Sigmoid colon (tissue), 7 donors: ENCODE measurements at regions of chr19 and their contacts with region 1.

Region 1: GRCh38 chr19:6372594-6373095 is at the start of gene ALKBH7:
- DNase-seq: peak; percentile 100
- H3K4me3 ChIP-seq: peak within 1 kb of the TSS; percentile 62 to 98 (median 88)
- H3K27ac ChIP-seq: peak within 1 kb of the TSS; percentile 95 to 100 (median 100)
- H3K4me1 ChIP-seq: peaks cover 4 to 24% (median 12%) of the 10 kb centered on the region in 4 donors
- H3K27me3 ChIP-seq: no peaks in the 10 kb centered on the region
- CTCF ChIP-seq: no peak
- EP300 ChIP-seq: no peak
- POLR2A ChIP-seq: peak; percentile 51 to 58
- total RNA-seq, gene ALKBH7: 65.8 to 146 (median 78.5) TPM

Region 2: DNA sequence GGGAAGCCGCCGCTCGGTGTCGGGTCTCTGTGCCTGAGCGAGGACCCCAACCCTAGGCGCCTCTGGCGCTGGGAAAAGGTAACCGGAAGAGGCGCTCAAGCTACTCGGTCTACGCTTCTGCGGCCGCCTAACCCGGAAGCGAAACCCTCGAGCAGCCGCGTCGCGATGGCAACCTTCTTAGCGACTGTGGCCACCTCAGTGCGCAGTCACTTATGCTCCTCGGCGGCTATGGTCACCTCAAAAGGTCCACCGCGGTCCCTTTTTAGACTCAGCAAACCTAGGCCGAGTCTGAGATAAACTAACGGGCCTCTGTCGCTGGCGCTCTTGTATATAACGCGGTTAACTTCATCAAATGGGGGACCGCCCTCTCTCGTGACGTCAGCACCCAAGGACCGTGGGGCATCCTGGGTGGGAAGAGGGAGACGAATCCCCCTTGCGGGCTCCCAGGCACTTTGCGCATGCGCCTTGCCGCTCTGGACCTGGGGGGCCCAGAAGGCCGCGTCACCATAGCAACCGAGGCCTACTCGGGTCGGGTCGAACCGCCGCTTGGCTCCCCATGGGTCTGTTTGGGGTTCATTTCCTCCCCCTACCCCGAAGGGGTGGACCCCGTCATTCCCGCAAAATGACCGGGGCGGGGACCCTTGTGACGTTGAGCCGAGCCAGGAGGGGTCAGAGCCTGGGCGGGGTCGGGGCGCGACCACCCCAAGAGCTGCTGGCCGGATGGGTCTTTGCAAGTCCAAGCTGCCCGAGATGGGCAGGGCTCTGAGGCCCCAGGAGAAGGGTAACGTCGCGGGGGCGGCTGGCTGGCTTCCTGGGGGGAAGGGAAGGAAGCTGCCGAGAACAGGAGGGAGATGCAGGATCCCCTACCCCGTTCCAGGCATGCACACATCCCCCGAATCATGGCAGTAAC is 20.7 kb after region 1 on chr19 and contains the start of gene GTF2F1:
- intact Hi-C with region 1: loop called (anchors 2 kb)
- DNase-seq: peak; percentile 98
- H3K4me3 ChIP-seq: peak within 1 kb of the TSS; percentile 69 to 93 (median 80)
- H3K27ac ChIP-seq: peak within 1 kb of the TSS; percentile 88 to 97 (median 95)
- H3K4me1 ChIP-seq: peaks cover 0 to 17% (median 12%) of the 10 kb centered on the region in 4 donors
- H3K27me3 ChIP-seq: no peaks in the 10 kb centered on the region
- CTCF ChIP-seq: no peak
- EP300 ChIP-seq: peak in 1 of 4 donors; percentile 30
- POLR2A ChIP-seq: peak in 1 of 2 donors; percentile 41
- total RNA-seq, gene GTF2F1: 34.9 to 48.2 (median 37.9) TPM

Region 3: GRCh38 chr19:6424939-6425731 is 52.5 kb after region 1 on chr19:
- intact Hi-C with region 1: loop called (anchors 5 kb)
- DNase-seq: peak; percentile 100
- H3K4me3 ChIP-seq: peak overlapping the region in 2 of 4 donors; percentile 84 to 85
- H3K27ac ChIP-seq: peak overlapping the region; percentile 80 to 89 (median 87)
- H3K4me1 ChIP-seq: peaks cover 4 to 38% (median 30%) of the 10 kb centered on the region in 4 donors
- H3K27me3 ChIP-seq: no peaks in the 10 kb centered on the region
- CTCF ChIP-seq: no peak
- EP300 ChIP-seq: no peak
- POLR2A ChIP-seq: no peak

Region 4: DNA sequence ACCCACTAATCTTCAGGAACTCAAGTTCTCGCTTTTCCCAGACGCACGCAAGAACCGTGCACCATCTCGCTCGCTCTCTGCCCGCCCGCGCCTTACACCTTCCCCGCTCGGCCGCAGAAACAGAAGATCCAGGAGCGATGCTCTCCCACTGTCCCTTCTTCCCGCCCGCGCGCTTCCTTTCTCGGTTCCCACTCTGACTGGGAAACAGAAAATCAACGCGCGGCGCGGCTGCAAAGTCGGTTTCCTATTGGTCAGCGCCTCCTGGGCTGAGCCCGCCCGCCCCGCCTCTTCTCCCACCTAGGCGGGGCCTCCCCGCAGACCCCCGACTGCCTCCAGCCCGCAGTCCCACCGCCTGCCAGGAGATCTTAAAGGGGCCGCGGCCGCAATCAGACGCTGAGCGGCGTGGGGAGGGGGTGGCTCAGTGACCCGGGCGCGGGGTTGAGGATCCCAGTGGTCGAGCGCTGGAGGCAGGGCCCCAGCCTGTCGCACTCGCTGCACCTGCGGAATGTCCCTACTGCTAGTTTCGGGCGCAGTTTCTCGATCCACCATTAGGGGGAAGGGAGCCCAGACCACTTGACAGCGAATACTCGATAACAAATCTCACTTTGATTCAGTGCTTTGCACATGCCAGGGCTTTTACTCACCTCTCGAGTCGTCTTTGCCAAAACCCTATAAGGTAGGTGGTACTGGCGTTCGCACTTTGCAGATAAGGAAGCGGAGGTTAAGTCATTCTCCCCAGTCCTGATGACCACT is 87.6 kb after region 1 on chr19:
- intact Hi-C with region 1: loop called (anchors 2 kb)
- DNase-seq: peak; percentile 97
- H3K4me3 ChIP-seq: peak overlapping the region; percentile 70 to 85 (median 78)
- H3K27ac ChIP-seq: peak overlapping the region; percentile 83 to 93 (median 88)
- H3K4me1 ChIP-seq: peaks cover 0 to 31% (median 22%) of the 10 kb centered on the region in 4 donors
- H3K27me3 ChIP-seq: peaks cover 10 to 25% (median 18%) of the 10 kb centered on the region in 3 donors
- CTCF ChIP-seq: peak; percentile 45 to 81 (median 72)
- EP300 ChIP-seq: no peak
- POLR2A ChIP-seq: peak in 1 of 2 donors; percentile 22

Region 5: DNA sequence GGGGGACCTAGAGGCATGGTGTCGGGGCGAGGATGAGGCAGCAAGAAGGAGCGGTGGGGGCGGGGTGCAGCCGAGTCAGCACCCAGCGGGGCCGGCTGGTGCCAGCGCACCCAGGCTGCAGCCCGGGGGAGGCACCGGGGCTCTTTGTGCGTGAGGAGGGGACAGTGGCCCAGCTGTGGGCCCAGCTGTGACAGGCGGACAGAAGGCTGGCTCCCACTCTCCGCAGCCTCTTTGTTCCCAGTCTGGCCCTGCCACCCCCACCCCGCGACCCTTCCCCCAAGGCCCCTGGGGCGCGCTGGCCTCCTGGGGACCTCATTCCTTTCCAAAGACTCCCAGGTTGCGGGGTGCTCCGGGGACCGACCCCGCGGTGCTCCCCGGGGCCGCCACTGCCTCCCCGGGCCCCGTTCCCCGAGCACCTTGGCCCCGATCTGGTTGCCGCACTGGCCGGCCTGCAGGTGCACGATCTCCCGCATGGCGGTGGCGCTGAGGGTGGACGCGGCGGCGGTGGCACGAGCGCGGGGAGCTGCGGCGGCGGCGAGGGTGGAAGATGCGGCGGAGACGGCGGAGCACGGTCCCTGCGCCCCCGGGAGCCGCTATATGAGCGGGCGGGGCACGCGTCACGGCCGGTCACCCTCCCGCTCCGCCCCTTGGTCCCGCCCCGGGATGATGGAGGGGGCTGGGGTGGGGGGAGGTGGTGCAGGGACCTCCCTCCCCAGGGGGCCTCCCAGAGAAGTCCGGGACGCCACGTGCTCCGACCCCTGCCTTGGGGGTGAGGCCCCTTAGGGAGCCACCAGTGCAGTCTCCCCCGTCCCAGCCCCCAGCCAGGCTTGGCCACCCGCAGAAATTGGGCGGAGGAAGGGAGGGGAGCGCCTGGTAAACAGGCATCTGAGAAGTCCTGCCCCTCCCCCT is 129.3 kb after region 1 on chr19 and contains the start of gene TUBB4A:
- intact Hi-C with region 1: no loop called
- DNase-seq: no peak
- H3K4me3 ChIP-seq: peak within 1 kb of the TSS in 3 of 4 donors; percentile 30 to 43 (median 42)
- H3K27ac ChIP-seq: no peak within 1 kb of the TSS
- H3K4me1 ChIP-seq: peaks cover 0 to 13% (median 13%) of the 10 kb centered on the region in 4 donors
- H3K27me3 ChIP-seq: peaks cover 18 to 44% (median 24%) of the 10 kb centered on the region in 3 donors
- CTCF ChIP-seq: no peak
- EP300 ChIP-seq: no peak
- POLR2A ChIP-seq: no peak
- total RNA-seq, gene TUBB4A: 2.0 to 6.1 (median 3.0) TPM

Region 6: GRCh38 chr19:7069042-7069903 is 696.6 kb after region 1 on chr19 and contains the start of gene ZNF557:
- intact Hi-C with region 1: loop called (anchors 10 kb)
- DNase-seq: peak; percentile 99
- H3K4me3 ChIP-seq: peak within 1 kb of the TSS; percentile 76 to 97 (median 90)
- H3K27ac ChIP-seq: peak within 1 kb of the TSS; percentile 78 to 84 (median 82)
- H3K4me1 ChIP-seq: peaks cover 0 to 14% (median 9%) of the 10 kb centered on the region in 4 donors
- H3K27me3 ChIP-seq: no peaks in the 10 kb centered on the region
- CTCF ChIP-seq: no peak
- EP300 ChIP-seq: no peak
- POLR2A ChIP-seq: no peak
- total RNA-seq, gene ZNF557: 6.9 to 10.0 (median 8.8) TPM